ENCODE measurements at regions of chr19 and their contacts with region 1.

Region 1: DNA sequence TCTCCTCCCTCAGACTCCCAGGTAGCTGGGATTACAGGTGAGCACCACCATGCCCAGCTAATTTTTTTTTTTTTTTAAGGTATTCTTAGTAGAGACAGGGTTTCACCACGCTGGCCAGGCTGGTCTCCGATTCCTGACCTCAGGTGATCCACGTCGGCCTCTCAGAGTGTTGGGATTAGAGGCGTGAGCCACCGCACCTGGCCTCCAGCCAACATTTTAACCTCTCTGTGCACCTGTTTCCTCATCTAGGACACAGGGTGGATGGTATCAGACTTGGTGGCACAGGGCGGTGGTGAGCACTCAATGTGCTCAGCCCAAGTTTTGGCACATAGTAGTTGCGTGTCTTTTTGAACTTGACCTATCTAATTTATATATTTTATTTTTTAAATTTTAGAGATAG is 12.5 kb downstream of the APBA3 start:
- DNase-seq: no peak
- H3K4me3 ChIP-seq: no peak overlapping the region
- H3K27me3 ChIP-seq: 0 out of 2 replicates have a peak, but pooled peaks cover 2% of the 10 kb centered on the region
- CTCF ChIP-seq: no peak

Region 2: DNA sequence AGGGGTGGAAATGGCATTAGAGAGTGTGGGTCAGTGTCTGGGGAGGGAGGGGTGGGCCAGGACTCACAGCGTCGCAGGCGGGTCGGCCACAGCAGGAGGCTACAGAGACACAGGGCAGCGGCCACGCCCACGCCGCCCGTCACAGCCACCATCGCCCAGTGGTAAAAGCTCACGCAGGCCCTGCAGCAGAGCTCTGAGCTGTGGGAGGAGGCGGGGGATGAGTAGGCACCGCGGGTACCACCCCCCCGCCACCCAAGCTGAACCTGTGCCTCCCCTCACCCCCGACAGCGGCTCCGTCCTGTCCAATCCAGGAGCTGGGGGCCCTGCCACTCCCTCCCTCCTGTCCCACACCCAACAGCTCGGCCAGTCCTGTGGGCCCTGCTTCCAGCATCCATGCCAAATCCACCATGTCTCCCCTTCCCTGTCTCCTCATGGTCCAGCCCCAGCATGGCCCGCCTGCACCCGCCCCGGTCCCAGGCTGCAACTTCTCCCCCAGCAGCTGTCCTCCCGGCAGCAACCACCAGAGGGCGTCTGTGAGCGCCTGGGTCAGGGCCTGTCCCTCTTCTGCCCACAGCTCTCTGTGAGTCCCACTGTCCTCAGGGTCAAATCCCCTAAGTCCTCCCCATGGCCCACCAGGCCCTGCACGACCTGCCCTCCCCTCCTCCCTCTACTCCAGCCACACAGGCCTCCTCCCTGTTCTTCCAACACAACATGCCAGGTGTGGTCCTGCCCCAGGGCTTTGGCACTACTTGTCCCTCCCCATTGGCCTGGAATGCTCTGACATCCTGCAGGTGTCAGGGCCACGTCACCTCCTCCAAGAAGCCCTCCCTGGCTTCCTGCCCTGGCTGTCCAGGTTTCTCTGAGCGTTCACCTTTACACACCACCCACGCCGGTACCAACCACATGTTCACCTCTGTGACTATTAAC is 204.0 kb before region 1 on chr19:
- CTCF ChIA-PET with region 1: no interaction called
- POLR2A ChIA-PET with region 1: no interaction called
- DNase-seq: no peak
- H3K4me3 ChIP-seq: no peak overlapping the region
- H3K27me3 ChIP-seq: no peaks in the 10 kb centered on the region
- CTCF ChIP-seq: peak; percentile 98

Region 3: GRCh38 chr19:4034048-4035017 is 285.4 kb after region 1 on chr19:
- CTCF ChIA-PET with region 1: no interaction called
- POLR2A ChIA-PET with region 1: interaction called, 13 read pairs
- DNase-seq: no peak
- H3K4me3 ChIP-seq: no peak overlapping the region
- H3K27me3 ChIP-seq: no peaks in the 10 kb centered on the region
- CTCF ChIP-seq: no peak